OCI-LY7 (cell line): ENCODE measurements at regions of chr10 and their contacts with region 1.

Region 1: GRCh38 chr10:28302638-28303488 is at the start of gene MPP7:
- DNase-seq: peak; percentile 98
- H3K4me3 ChIP-seq: peak within 1 kb of the TSS; percentile 73
- H3K27ac ChIP-seq: peak within 1 kb of the TSS; percentile 58
- H3K4me1 ChIP-seq: peaks cover 56% of the 10 kb centered on the region
- CTCF ChIP-seq: peak; percentile 55
- total RNA-seq, gene MPP7: 15.0 and 20.4 TPM in 2 replicates

Region 2: GRCh38 chr10:28250782-28251181 is 52.1 kb before region 1 on chr10:
- CTCF ChIA-PET with region 1: interaction called, 6 read pairs
- POLR2A ChIA-PET with region 1: interaction called, 7 read pairs
- intact Hi-C with region 1: loop called (anchors 1 kb)
- DNase-seq: peak; percentile 44
- H3K4me3 ChIP-seq: no peak overlapping the region
- H3K27ac ChIP-seq: no peak overlapping the region
- H3K4me1 ChIP-seq: no peaks in the 10 kb centered on the region
- CTCF ChIP-seq: peak; percentile 91

Region 3: GRCh38 chr10:28326516-28327490 is 23.9 kb after region 1 on chr10:
- CTCF ChIA-PET with region 1: interaction called, 5 read pairs
- POLR2A ChIA-PET with region 1: interaction called, 21 read pairs
- intact Hi-C with region 1: no loop called
- DNase-seq: peak; percentile 23
- H3K4me3 ChIP-seq: peak overlapping the region; percentile 11
- H3K27ac ChIP-seq: peak overlapping the region; percentile 21
- H3K4me1 ChIP-seq: peaks cover 54% of the 10 kb centered on the region
- CTCF ChIP-seq: no peak

Region 4: GRCh38 chr10:28367929-28368484 is 65.1 kb after region 1 on chr10:
- CTCF ChIA-PET with region 1: no interaction called
- POLR2A ChIA-PET with region 1: interaction called, 10 read pairs
- intact Hi-C with region 1: loop called (anchors 5 kb)
- DNase-seq: peak; percentile 93
- H3K4me3 ChIP-seq: peak overlapping the region; percentile 1
- H3K27ac ChIP-seq: peak overlapping the region; percentile 92
- H3K4me1 ChIP-seq: peaks cover 41% of the 10 kb centered on the region
- CTCF ChIP-seq: no peak